Ovary (tissue), 10 donors: ENCODE measurements at regions of chr2 and their contacts with region 1.

Region 1: GRCh38 chr2:46650556-46651001 is 171.2 kb downstream of the TMEM247 start:
- DNase-seq: peak in 4 of 5 donors; percentile 47 to 82 (median 68)
- H3K4me3 ChIP-seq: no peak overlapping the region
- H3K27ac ChIP-seq: no peak overlapping the region
- H3K4me1 ChIP-seq: peaks cover 2% of the 10 kb centered on the region
- H3K27me3 ChIP-seq: no peaks in the 10 kb centered on the region
- CTCF ChIP-seq: peak; percentile 88 to 92 (median 91)
- EP300 ChIP-seq: no peak
- POLR2A ChIP-seq: no peak

Region 2: DNA sequence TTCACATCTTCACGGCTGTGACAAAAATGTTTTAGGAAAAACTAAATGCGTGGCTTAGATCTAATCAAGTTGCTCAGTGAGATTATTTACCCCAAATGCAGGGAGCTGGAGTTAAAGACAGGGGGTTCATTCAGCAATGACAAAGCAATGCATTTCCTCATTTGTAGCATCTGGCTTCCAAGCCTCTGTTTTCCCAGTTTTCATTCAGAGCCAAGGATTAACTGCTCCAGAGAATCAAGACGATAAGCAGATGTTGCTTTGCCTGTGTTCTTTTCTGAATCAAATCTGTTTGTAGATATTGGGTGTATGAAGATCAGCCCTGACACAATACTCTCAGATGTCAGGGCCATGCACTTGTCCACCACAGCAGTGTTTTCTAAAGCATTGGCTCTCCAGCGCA is 1494.0 kb before region 1 on chr2:
- intact Hi-C with region 1: no loop called
- DNase-seq: no peak
- H3K4me3 ChIP-seq: no peak overlapping the region
- H3K27ac ChIP-seq: no peak overlapping the region
- H3K4me1 ChIP-seq: no peaks in the 10 kb centered on the region
- H3K27me3 ChIP-seq: no peaks in the 10 kb centered on the region
- CTCF ChIP-seq: no peak
- EP300 ChIP-seq: no peak
- POLR2A ChIP-seq: no peak

Region 3: DNA sequence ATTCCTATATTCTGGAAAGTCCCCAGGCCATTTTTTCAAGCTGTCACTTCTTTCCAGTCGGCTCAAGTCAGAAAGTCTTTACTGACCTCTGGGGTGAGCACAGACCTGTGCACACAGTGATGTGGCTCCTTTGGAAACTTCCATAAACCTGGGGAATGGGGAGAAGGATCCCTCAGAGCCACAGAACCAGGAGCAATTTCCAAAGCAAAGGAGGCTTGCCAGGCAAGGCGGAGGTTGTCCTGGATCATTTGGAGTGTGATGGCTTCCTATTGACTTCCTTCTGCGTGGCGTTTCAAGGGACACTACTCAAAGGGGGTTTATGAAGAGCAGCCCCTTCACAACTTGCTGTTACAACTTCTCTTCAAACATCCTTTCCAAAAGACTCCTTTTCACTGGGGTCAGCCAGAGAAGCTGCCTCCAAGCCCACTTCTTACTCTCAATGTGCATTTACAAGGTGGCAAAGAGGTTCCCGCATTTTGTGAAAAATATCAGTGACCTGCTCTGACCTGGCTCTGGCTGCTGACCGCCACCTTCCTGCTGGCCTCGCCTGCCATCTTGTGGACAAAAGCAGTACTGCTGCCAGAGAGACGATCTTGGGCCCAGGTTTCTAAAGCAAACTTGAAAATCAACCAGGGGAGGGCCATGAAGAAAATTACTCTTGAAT is 189.4 kb before region 1 on chr2:
- intact Hi-C with region 1: loop called in 1 of 4 experiments (anchors 2 kb)
- DNase-seq: peak; percentile 69 to 88 (median 86)
- H3K4me3 ChIP-seq: no peak overlapping the region
- H3K27ac ChIP-seq: peak overlapping the region in 1 of 2 donors; percentile 27
- H3K4me1 ChIP-seq: peaks cover 5% of the 10 kb centered on the region
- H3K27me3 ChIP-seq: no peaks in the 10 kb centered on the region
- CTCF ChIP-seq: peak; percentile 95 to 98 (median 95)
- EP300 ChIP-seq: no peak
- POLR2A ChIP-seq: peak; percentile 18

Region 4: GRCh38 chr2:46776687-46777327 is 126.2 kb after region 1 on chr2:
- intact Hi-C with region 1: loop called in 2 of 4 experiments (anchors 10 kb)
- DNase-seq: peak; percentile 54 to 82 (median 71)
- H3K4me3 ChIP-seq: no peak overlapping the region
- H3K27ac ChIP-seq: no peak overlapping the region
- H3K4me1 ChIP-seq: peaks cover 11% of the 10 kb centered on the region
- H3K27me3 ChIP-seq: no peaks in the 10 kb centered on the region
- CTCF ChIP-seq: peak in 2 of 3 donors; percentile 41 to 48
- EP300 ChIP-seq: no peak
- POLR2A ChIP-seq: no peak